ENCODE measurements at regions of chr12 and their contacts with region 1.

Region 1: DNA sequence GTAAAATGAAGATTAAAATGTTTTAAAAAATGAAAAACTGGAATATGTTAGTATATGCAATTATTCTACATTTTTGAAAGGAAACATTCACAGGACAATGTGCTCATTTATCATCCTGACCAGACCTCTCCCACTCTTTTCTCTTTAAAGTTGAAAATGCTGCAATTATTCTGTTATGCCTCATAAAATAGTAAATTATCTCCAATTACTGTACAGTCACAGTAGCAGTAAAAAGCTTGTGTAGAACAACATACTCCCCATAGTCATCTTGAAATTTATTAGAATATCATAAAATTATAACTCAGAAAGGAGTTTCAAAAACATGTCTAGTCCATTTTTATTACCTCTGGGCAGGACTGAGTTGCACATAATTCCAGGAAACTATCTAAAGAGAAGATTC is 250.3 kb downstream of the SYT1 start:
- DNase-seq: no peak
- ATAC-seq: no peak

Region 2: GRCh38 chr12:78820946-78821345 is 293.9 kb before region 1 on chr12:
- intact Hi-C with region 1: loop called (anchors 5 kb)
- DNase-seq: no peak
- ATAC-seq: no peak